ENCODE measurements at regions of chr13 and their contacts with region 1.

Region 1: DNA sequence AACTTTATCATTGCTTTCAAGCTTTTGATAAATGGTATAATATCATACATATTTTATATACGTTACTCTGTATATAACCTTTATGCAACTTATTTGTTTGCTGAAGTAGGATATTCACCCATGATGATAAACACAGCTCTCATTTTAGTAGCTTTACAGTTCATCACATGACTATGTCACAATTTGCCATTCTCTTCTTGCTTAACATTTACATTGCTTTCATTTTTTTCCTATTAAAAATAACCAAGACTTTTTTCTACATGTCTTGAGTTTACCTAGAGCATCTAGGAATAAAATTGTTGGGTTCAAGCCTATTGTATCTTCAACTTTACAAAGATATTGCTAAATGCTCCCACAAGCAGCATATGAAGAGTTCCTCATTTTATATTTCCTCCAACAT is 54.0 kb downstream of the KCNRG start:
- DNase-seq: no peak
- H3K4me3 ChIP-seq: no peak overlapping the region
- H3K27ac ChIP-seq: peak overlapping the region in 1 of 4 donors; percentile 17
- H3K4me1 ChIP-seq: peaks cover 0 to 37% (median 7%) of the 10 kb centered on the region in 4 donors
- H3K27me3 ChIP-seq: no peaks in the 10 kb centered on the region
- CTCF ChIP-seq: no peak
- EP300 ChIP-seq: no peak
- POLR2A ChIP-seq: no peak

Region 2: DNA sequence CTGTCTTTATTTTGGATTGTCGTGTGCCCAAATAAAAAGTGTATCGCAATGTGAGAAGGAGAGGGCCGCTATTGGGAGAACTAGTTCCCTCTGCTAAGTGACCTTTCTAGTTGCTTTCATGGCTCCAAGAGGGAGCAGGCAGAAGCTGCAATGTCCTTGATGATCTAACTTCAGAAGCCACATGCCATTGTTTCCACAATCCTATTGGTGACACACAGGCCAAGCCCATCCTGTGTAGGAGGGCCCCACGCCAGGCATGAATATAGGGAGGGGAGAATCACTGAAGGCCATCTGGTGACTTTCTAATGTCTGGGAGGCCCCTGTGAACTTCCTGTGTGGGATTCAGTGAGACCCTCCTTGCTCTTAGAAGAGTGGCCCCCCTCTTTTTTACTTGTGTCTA is 229.0 kb before region 1 on chr13:
- in situ Hi-C with region 1: no loop called
- intact Hi-C with region 1: no loop called
- DNase-seq: no peak
- H3K4me3 ChIP-seq: no peak overlapping the region
- H3K27ac ChIP-seq: no peak overlapping the region
- H3K4me1 ChIP-seq: no peaks in the 10 kb centered on the region
- H3K27me3 ChIP-seq: no peaks in the 10 kb centered on the region
- CTCF ChIP-seq: no peak
- EP300 ChIP-seq: no peak
- POLR2A ChIP-seq: no peak

Region 3: GRCh38 chr13:50006426-50007135 is 62.7 kb before region 1 on chr13:
- in situ Hi-C with region 1: loop called in 2 of 4 experiments (anchors 10 kb)
- intact Hi-C with region 1: no loop called
- DNase-seq: peak; percentile 78
- H3K4me3 ChIP-seq: no peak overlapping the region
- H3K27ac ChIP-seq: peak overlapping the region; percentile 60 to 77 (median 72)
- H3K4me1 ChIP-seq: peaks cover 5 to 66% (median 45%) of the 10 kb centered on the region in 4 donors
- H3K27me3 ChIP-seq: no peaks in the 10 kb centered on the region
- CTCF ChIP-seq: no peak
- EP300 ChIP-seq: no peak
- POLR2A ChIP-seq: no peak

Region 4: DNA sequence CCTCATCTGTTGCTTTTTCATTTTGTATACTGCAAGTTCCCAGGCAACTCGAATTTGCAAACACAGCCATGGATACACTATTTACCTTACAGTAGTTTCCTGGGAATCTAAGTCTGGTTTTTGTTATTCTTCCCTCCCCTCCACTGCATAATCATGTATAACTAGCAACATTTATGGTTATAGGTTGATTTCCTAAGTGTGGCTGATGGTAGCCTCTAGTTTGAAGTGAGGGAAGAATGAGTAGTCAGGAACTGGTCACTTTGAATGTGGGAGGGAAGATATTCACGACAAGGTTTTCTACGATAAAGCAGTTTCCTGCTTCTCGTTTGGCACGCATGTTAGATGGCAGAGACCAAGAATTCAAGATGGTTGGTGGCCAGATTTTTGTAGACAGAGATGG is 54.0 kb before region 1 on chr13 and contains the start of gene KCNRG:
- in situ Hi-C with region 1: loop called in 1 of 4 experiments (anchors 10 kb)
- intact Hi-C with region 1: no loop called
- DNase-seq: no peak
- H3K4me3 ChIP-seq: no peak within 1 kb of the TSS
- H3K27ac ChIP-seq: peak within 1 kb of the TSS; percentile 9 to 54 (median 42)
- H3K4me1 ChIP-seq: peaks cover 4 to 22% (median 8%) of the 10 kb centered on the region in 4 donors
- H3K27me3 ChIP-seq: no peaks in the 10 kb centered on the region
- CTCF ChIP-seq: no peak
- EP300 ChIP-seq: no peak
- POLR2A ChIP-seq: no peak
- total RNA-seq, gene KCNRG: 2.9 to 3.7 TPM in 2 of 4 donors, not detected in the others